RWPE1 (cell line): ENCODE measurements at regions of chr11 and their contacts with region 1.

Region 1: DNA sequence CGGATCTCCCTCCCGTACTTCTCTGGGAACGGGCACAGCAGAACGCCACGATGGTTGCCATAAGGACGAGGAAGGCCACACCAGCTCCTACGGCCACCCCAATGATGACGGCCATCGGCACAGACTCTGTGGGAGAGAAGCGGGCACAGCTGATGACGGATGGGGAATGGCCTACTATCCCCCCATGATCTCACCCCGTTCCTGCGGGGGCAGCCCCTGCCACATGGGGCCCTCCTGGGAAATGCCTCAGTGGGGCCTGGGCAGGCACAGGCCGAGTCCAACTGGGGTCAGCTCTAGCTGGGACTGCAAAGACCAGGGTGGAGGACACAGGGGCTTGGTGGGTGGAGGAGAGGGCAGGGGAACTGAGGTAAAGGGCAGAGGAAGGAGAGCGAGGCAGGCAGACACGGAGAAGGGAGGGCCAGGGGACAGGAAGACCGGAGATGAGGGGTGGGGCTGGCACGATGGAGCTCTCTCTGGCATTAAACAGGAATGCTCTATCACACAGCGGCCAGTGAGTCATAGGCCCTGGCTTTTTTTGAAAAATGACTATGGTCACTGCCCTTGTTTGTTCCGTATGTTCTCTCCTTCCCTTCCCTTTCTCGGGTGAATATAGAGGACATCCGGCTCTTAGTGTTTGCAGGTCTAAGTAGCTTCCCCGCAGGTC is 76.0 kb downstream of the ST3GAL4 start:
- DNase-seq: peak; percentile 89
- H3K27ac ChIP-seq: peak overlapping the region; percentile 87
- CTCF ChIP-seq: no peak

Region 2: GRCh38 chr11:126277780-126278179 is 153.8 kb before region 1 on chr11:
- CTCF ChIA-PET with region 1: no interaction called
- POLR2A ChIA-PET with region 1: no interaction called
- DNase-seq: no peak
- H3K27ac ChIP-seq: peak overlapping the region; percentile 53
- CTCF ChIP-seq: no peak

Region 3: GRCh38 chr11:126310228-126310991 is 121.1 kb before region 1 on chr11:
- CTCF ChIA-PET with region 1: interaction called, 15 read pairs
- POLR2A ChIA-PET with region 1: no interaction called
- DNase-seq: peak; percentile 60
- H3K27ac ChIP-seq: peak overlapping the region; percentile 33; the same call in 1 of the 2 replicates
- CTCF ChIP-seq: peak; percentile 85